Activated naive CD4-positive, alpha-beta T cell treated with anti-CD3 and anti-CD28 coated beads for 36 hours (primary cell): ENCODE measurements at regions of chr9 and their contacts with region 1.

Region 1: GRCh38 chr9:70419546-70420266 is 5.2 kb upstream of the KLF9 start:
- DNase-seq: peak; percentile 94
- H3K4me3 Mint-ChIP-seq: peak overlapping the region; percentile 96
- H3K27ac Mint-ChIP-seq: peak overlapping the region; percentile 100
- H3K4me1 Mint-ChIP-seq: peaks cover 47% of the 10 kb centered on the region
- H3K27me3 Mint-ChIP-seq: no peaks in the 10 kb centered on the region

Region 2: DNA sequence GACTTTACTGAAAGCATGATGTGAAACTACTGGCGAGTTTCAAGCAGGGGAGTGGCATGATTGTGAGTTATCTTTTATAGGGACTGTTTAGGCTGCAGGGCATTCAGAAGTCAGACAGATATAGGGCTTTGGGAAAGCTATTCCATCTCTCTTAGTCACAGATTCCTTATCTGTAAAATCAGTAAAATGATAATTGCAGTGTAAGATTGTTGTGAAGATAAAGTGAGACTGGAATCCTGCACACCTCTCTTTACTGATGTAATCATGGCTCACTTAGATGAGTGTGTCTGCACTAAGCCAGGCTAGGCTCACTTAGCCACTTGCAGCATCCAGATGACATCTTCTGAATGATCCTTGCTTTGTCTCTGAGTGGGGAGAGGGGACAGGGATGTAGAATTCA is 457.9 kb before region 1 on chr9:
- CTCF ChIA-PET with region 1: no interaction called
- intact Hi-C with region 1: no loop called
- DNase-seq: no peak
- H3K4me3 Mint-ChIP-seq: no peak overlapping the region
- H3K27ac Mint-ChIP-seq: no peak overlapping the region
- H3K4me1 Mint-ChIP-seq: no peaks in the 10 kb centered on the region
- H3K27me3 Mint-ChIP-seq: peaks cover 2% of the 10 kb centered on the region

Region 3: DNA sequence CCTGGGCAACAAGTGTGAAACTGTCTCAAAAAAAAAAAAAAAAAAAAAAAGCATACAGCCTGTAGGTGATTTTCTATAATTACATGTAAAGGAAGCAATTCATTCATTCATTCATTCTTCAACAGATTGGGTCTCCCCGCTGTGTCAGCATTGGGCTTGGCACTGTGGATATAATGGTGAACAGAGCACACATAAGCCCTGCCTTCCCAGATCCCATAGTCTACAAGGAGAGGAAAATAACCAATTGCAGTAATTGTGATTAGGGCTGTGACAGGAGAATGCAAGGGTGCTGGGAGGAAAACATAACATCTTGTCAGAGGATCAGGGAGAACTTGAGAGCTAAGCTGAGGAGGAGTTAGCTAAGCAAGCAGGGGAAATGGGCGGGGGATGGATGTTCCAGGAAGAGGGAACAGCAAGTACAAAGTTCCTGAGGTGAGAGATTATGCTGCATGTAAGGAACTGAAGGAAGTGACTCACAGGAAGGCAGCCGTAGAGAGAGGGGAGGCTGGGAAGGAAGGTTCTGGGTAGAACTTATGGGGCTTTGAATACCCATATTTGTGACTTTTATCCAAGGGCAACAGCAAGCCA is 18.7 kb after region 1 on chr9:
- CTCF ChIA-PET with region 1: interaction called, 5 read pairs
- intact Hi-C with region 1: loop called (anchors 1 kb)
- DNase-seq: peak; percentile 50
- H3K4me3 Mint-ChIP-seq: no peak overlapping the region
- H3K27ac Mint-ChIP-seq: no peak overlapping the region
- H3K4me1 Mint-ChIP-seq: peaks cover 16% of the 10 kb centered on the region
- H3K27me3 Mint-ChIP-seq: no peaks in the 10 kb centered on the region

Region 4: GRCh38 chr9:70519912-70520724 is 100.4 kb after region 1 on chr9:
- CTCF ChIA-PET with region 1: interaction called, 3 read pairs
- intact Hi-C with region 1: loop called (anchors 1 kb)
- DNase-seq: peak; percentile 49
- H3K4me3 Mint-ChIP-seq: peak overlapping the region; percentile 53
- H3K27ac Mint-ChIP-seq: peak overlapping the region; percentile 82
- H3K4me1 Mint-ChIP-seq: peaks cover 32% of the 10 kb centered on the region
- H3K27me3 Mint-ChIP-seq: no peaks in the 10 kb centered on the region

Region 5: DNA sequence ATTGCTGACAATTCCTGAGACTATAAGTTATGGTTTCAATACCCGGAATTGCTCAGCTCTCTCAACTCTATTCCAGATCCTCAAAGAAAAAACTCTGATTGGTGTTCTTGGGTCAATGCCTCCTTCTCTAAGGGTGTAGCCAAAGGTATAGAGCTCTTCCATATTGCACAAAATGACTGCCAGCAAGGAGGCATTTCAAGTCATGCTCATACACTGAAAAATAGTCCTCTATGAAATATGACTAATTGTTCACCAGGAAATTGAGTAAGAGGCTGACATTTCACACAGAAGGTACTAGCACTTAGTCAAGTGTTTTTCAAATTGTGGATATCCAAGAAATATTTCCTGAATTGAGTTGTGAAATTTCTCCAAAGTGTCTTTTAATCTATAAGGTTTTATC is 105.8 kb after region 1 on chr9:
- CTCF ChIA-PET with region 1: no interaction called
- intact Hi-C with region 1: loop called (anchors 1 kb)
- DNase-seq: no peak
- H3K4me3 Mint-ChIP-seq: no peak overlapping the region
- H3K27ac Mint-ChIP-seq: peak overlapping the region; percentile 5
- H3K4me1 Mint-ChIP-seq: peaks cover 30% of the 10 kb centered on the region
- H3K27me3 Mint-ChIP-seq: no peaks in the 10 kb centered on the region